PC-3 (cell line): ENCODE measurements at regions of chr2 and their contacts with region 1.

Region 1: GRCh38 chr2:224561234-224562005 is 23.7 kb downstream of the CUL3 start:
- DNase-seq: no peak
- ATAC-seq: no peak
- H3K4me3 ChIP-seq: no peak overlapping the region
- H3K27ac ChIP-seq: peak overlapping the region; percentile 96
- H3K4me1 ChIP-seq: peaks cover 33% of the 10 kb centered on the region
- H3K27me3 ChIP-seq: no peaks in the 10 kb centered on the region
- CTCF ChIP-seq: no peak

Region 2: DNA sequence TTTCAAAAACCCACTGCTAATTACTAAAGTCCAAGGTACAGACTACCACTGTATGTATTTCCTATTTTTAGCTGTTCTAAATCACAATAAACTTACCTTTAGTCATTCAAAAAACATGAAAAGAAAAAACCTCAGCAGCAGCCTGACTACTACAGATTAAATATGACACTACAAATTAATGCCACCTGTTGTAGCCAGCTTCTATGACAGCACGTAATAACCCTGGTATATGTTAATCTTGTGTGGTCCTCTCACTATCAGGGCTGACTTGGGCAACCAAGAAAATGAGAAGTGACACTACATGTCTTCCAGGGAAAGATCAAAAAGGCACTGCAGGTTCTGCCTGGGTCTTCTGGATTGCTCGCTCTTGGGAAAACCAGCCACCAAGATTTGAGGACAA is 68.9 kb before region 1 on chr2:
- CTCF ChIA-PET with region 1: no interaction called
- POLR2A ChIA-PET with region 1: no interaction called
- intact Hi-C with region 1: loop called (anchors 5 kb)
- DNase-seq: no peak
- ATAC-seq: no peak
- H3K4me3 ChIP-seq: no peak overlapping the region
- H3K27ac ChIP-seq: no peak overlapping the region
- H3K4me1 ChIP-seq: no peaks in the 10 kb centered on the region
- H3K27me3 ChIP-seq: no peaks in the 10 kb centered on the region
- CTCF ChIP-seq: no peak

Region 3: DNA sequence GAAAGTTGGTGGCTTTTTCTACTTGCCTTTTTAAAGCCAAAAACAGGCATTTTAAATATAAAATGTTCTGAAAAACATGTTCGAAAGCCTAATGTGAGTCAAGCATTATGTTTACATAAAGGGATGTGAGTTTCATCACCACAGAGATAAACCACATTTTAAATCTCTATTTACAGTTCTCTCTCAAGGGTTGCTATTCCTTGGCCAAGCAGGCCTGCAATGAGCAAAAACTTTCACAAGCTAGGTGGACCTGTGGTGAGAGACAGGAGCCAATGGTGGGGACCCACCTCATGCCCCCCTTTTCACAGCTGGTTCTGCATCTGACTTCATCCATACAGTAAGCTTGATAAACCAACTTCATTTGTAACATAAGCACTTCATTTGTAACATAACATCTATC is 41.4 kb before region 1 on chr2:
- CTCF ChIA-PET with region 1: no interaction called
- POLR2A ChIA-PET with region 1: no interaction called
- intact Hi-C with region 1: loop called (anchors 5 kb)
- DNase-seq: peak; percentile 57
- ATAC-seq: peak; percentile 91
- H3K4me3 ChIP-seq: no peak overlapping the region
- H3K27ac ChIP-seq: peak overlapping the region; percentile 19; the same call in 1 of the 2 replicates
- H3K4me1 ChIP-seq: peaks cover 24% of the 10 kb centered on the region
- H3K27me3 ChIP-seq: no peaks in the 10 kb centered on the region
- CTCF ChIP-seq: no peak

Region 4: GRCh38 chr2:224585205-224586088 is 24.0 kb after region 1 on chr2 and contains the start of gene CUL3:
- CTCF ChIA-PET with region 1: no interaction called
- POLR2A ChIA-PET with region 1: interaction called, 8 read pairs
- intact Hi-C with region 1: loop called (anchors 1 kb)
- DNase-seq: peak; percentile 95
- ATAC-seq: peak; percentile 90
- H3K4me3 ChIP-seq: peak within 1 kb of the TSS; percentile 76
- H3K27ac ChIP-seq: peak within 1 kb of the TSS; percentile 43
- H3K4me1 ChIP-seq: peaks cover 25% of the 10 kb centered on the region
- H3K27me3 ChIP-seq: no peaks in the 10 kb centered on the region
- CTCF ChIP-seq: no peak
- total RNA-seq, gene CUL3: 50.4 and 54.9 TPM in 2 replicates